ENCODE measurements at regions of chr1 and their contacts with region 1.

Region 1: DNA sequence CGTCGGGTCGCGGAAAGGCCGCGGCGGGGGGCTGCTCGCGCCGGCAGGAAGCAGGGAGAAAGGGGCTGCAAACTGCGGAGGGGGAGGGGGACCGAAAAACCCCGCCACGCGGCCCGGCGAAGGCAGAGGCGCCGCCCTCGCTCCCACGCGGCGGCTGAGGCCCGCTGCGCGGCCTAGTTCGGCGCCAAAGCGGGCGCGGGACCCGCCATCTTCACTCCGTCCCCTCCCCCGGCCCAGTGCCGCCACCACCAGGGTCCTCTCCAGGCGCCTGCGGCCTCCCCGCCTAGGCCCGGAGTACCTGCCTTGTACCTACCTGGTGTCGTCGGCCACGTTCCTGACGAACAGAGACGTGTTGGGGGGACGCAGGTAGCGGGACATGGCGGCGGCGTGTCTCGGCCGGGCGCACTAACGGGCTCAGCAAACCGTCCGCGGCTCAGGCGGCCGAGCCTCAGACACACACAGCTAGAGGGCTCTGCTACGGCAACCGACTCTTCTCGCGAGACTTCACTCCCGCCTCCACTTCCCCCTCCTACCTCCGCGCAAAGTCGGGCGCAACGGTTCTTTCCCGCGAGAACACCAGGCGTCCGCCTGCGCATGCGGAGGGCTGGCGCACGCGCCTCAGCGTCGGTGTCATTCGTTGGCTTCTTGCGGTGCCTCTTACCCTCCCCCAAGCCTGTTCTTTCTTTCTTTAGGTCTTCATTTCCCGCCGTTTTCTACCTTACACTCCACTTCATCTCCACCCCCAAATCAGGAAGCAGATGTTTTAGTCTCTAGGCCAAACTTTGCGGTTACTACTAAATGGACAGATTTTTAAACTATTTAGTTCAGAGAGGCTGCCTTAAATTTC is at the start of gene SRSF10:
- DNase-seq: peak; percentile 99
- ATAC-seq: peak; percentile 100
- H3K4me3 ChIP-seq: peak within 1 kb of the TSS; percentile 14 to 77
- H3K27ac ChIP-seq: peak within 1 kb of the TSS; percentile 6 to 89
- H3K4me1 ChIP-seq: peaks cover 5 to 7% of the 10 kb centered on the region in 2 donors
- H3K27me3 ChIP-seq: no peaks in the 10 kb centered on the region
- total RNA-seq, gene SRSF10: 91.1 to 98.4 TPM

Region 2: GRCh38 chr1:23959041-23959460 is 21.1 kb before region 1 on chr1:
- intact Hi-C with region 1: loop called in 1 of 2 experiments (anchors 1 kb)
- DNase-seq: peak; percentile 92 to 93
- ATAC-seq: peak; percentile 84
- H3K4me3 ChIP-seq: peak overlapping the region; percentile 35 to 45
- H3K27ac ChIP-seq: peak overlapping the region; percentile 39 to 92
- H3K4me1 ChIP-seq: no peaks in the 10 kb centered on the region
- H3K27me3 ChIP-seq: no peaks in the 10 kb centered on the region

Region 3: DNA sequence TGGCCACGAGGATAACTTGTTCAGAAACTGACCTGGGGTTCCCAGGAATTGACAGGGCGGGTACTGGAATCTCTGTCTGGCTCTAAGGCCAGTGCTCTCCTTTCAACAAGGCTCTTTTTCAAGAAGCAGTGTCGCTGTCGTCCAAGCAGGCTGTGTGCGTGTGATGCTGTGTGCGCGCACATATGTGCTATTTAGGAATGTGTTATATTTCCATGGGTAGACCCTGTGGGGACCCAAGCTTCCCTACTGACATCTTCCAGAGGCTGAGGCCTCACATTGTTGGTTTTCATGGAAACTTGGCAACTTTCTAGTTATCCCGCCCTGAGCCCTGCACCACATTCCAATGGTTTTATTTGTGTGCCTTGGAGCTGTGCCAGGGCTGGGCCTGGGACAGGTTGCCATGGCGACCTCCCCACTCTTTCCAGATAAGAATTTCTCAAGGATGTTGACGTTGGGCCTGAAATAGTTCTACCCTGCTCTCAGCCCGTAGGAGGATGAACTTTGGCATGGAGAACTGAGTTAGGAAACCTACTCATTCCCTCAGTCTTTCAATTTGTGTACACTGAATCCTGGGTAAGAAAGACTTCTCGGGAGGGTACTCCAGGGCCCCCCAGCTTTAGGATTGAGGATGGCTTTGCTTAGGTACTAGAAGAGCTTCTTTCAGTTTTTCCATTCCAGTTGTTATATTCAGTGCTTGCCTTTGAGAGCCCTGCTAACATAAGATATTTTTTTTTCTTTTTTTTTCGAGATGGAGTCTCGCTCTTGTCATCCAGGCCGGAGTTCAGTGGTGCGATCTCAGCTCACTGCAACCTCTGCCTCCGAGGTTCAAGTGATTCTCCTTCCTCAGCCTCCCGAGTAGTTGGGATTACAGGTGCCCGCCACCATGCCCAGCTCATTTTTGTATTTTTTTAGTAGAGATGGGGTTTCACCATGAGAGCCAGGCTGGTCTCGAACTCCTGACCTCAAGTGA is 38.8 kb after region 1 on chr1:
- intact Hi-C with region 1: loop called (anchors 5 kb)
- DNase-seq: peak; percentile 95 to 98
- ATAC-seq: peak; percentile 93
- H3K4me3 ChIP-seq: no peak overlapping the region
- H3K27ac ChIP-seq: peak overlapping the region; percentile 51 to 98
- H3K4me1 ChIP-seq: peaks cover 2 to 6% of the 10 kb centered on the region in 2 donors
- H3K27me3 ChIP-seq: no peaks in the 10 kb centered on the region

Region 4: DNA sequence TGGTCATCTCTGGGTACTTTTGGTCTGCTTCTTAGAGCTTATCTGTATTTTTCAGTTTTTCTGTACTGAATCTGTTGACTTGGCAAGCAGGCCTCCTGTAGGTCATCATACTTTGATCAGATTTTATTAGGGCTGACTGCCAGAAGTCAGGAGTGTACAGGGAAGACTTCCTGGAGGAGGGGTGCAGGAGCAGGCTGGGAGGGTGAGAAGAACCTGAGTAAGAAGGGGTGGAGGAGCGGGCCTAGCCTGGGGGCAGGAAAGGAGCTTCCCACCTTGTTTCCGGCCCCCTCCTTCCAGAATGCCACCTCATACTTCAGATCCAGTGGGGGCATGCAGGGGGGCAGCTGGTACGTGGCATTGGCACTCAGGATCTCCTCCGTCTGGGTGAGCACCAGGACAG is 181.2 kb after region 1 on chr1:
- intact Hi-C with region 1: no loop called
- DNase-seq: no peak
- ATAC-seq: no peak
- H3K4me3 ChIP-seq: no peak overlapping the region
- H3K27ac ChIP-seq: no peak overlapping the region
- H3K4me1 ChIP-seq: no peaks in the 10 kb centered on the region
- H3K27me3 ChIP-seq: no peaks in the 10 kb centered on the region